ENCODE measurements at regions of chr11 and their contacts with region 1.

Region 1: DNA sequence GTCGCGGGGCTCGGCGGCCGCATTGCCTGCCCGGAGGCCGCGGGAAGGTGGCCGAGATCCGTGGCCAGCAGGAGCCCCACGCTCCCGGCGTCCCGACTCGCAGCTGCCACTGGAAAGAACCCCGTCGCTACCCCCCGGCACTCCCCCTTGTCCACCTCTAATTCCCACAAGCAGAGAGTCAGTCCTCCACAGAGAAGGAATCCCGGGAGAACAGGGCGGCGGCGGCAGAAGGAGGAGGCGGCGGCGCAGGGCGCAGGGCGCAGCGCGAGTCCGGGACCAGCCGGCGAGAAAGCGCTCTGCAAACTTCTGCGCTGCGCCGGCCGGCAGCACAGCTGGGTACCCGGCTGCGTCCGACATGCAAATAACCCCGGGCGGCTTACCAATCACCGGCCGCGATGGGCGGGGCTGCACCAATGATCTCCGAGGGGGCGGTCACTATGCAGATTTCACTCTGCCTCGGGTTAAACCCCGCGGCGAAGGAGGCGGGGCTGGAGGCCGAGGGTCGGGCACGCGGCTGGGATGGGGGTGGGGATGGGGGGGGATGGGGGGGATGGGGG is at the start of gene ABTB2:
- DNase-seq: peak; percentile 96
- ATAC-seq: peak; percentile 89
- H3K4me3 ChIP-seq: peak within 1 kb of the TSS; percentile 56 to 70 (median 66)
- H3K4me3 Mint-ChIP-seq: peak within 1 kb of the TSS; percentile 90
- H3K27ac ChIP-seq: peak within 1 kb of the TSS in 1 of 2 donors; percentile 43
- H3K27ac Mint-ChIP-seq: peak within 1 kb of the TSS; percentile 88
- H3K4me1 ChIP-seq: peaks cover 18 to 33% of the 10 kb centered on the region in 2 donors
- H3K4me1 Mint-ChIP-seq: peaks cover 28% of the 10 kb centered on the region
- H3K27me3 ChIP-seq: peaks cover 0 to 49% (median 41%) of the 10 kb centered on the region in 4 experiments
- H3K27me3 Mint-ChIP-seq: peaks cover 54% of the 10 kb centered on the region
- CTCF ChIP-seq: no peak
- total RNA-seq, gene ABTB2: 4.5 and 5.9 TPM in 2 replicates

Region 2: GRCh38 chr11:33389635-33390034 is 968.1 kb before region 1 on chr11:
- CTCF ChIA-PET with region 1: no interaction called
- POLR2A ChIA-PET with region 1: no interaction called
- intact Hi-C with region 1: loop called (anchors 10 kb)
- DNase-seq: no peak
- ATAC-seq: peak; percentile 45
- H3K4me3 ChIP-seq: peak overlapping the region in 1 of 5 experiments; percentile 44
- H3K4me3 Mint-ChIP-seq: peak overlapping the region; percentile 57
- H3K27ac ChIP-seq: no peak overlapping the region
- H3K27ac Mint-ChIP-seq: peak overlapping the region; percentile 2
- H3K4me1 ChIP-seq: peaks cover 24 to 32% of the 10 kb centered on the region in 2 donors
- H3K4me1 Mint-ChIP-seq: peaks cover 33% of the 10 kb centered on the region
- H3K27me3 ChIP-seq: no peaks in the 10 kb centered on the region
- H3K27me3 Mint-ChIP-seq: no peaks in the 10 kb centered on the region
- CTCF ChIP-seq: no peak

Region 3: DNA sequence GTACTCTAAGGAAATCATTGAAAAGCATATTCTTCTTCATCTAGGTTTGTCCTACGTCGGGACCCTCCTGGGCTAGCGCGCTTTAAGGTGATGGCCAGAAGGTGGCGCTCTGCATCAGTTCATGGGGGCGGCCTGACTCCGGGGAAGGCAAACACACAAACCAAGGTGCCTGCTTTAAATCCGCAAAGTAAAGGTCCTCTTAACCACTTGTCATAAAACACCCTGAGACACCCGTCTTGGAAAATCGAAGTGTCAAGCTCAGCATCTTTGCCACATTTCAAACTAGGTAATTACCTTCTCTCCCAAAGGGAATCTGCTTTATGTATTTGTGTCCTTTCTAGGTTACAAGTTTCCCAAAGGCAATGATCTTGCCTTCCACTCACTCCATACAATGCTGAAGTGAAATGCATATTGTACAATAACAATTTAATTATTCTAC is 499.8 kb before region 1 on chr11:
- CTCF ChIA-PET with region 1: interaction called, 7 read pairs
- POLR2A ChIA-PET with region 1: no interaction called
- intact Hi-C with region 1: loop called (anchors 1 kb)
- DNase-seq: peak; percentile 86
- ATAC-seq: peak; percentile 96
- H3K4me3 ChIP-seq: no peak overlapping the region
- H3K4me3 Mint-ChIP-seq: no peak overlapping the region
- H3K27ac ChIP-seq: no peak overlapping the region
- H3K27ac Mint-ChIP-seq: no peak overlapping the region
- H3K4me1 ChIP-seq: no peaks in the 10 kb centered on the region
- H3K4me1 Mint-ChIP-seq: peaks cover 6% of the 10 kb centered on the region
- H3K27me3 ChIP-seq: no peaks in the 10 kb centered on the region
- H3K27me3 Mint-ChIP-seq: no peaks in the 10 kb centered on the region
- CTCF ChIP-seq: peak; percentile 93

Region 4: DNA sequence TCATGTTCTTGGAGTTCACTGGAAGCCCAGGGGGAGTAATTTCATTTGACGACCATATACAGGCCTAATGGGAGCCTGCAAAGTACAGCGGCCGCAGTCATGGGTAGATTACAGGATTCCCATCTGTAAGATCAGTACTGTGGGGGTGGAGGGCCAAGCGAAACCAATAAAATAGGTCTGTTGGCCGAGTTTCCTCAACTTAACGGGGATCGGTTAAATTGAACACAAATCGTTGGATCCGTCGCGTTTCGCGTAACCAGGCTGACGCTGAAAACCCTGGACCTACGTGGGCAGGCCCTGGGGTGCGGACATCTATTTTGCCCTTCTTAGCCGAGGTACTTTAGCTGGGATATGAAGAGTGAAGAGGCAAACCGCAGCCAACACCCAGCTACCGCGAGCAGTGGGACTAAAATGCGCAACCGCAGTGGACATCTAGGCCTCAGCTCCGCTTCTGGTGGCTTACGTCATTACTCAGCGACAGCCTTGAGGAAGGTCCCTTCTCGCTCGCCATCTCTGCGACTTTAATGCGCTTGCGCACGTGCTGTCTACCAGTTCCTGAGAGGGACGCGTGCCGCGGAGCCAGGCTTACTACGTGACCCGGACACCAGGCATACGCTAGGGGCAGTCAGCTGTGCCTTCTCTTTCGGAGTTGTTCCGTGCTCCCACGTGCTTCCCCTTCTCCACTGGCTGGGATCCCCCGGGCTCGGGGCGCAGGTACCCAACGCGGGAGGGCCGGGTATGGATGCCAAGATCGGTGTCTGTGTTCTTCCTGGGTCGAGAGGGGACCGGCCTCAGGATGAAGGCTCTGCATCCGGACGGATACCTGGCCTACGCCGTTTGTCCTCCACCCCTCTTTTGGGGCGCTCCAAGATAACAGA is 252.5 kb before region 1 on chr11 and contains the start of gene NAT10:
- CTCF ChIA-PET with region 1: interaction called, 3 read pairs
- POLR2A ChIA-PET with region 1: interaction called, 5 read pairs
- intact Hi-C with region 1: loop called (anchors 1 kb)
- DNase-seq: peak; percentile 99
- ATAC-seq: peak; percentile 91
- H3K4me3 ChIP-seq: peak within 1 kb of the TSS; percentile 70 to 99 (median 93)
- H3K4me3 Mint-ChIP-seq: peak within 1 kb of the TSS; percentile 97
- H3K27ac ChIP-seq: peak within 1 kb of the TSS; percentile 95 to 96
- H3K27ac Mint-ChIP-seq: peak within 1 kb of the TSS; percentile 100
- H3K4me1 ChIP-seq: peaks cover 24 to 28% of the 10 kb centered on the region in 2 donors
- H3K4me1 Mint-ChIP-seq: peaks cover 47% of the 10 kb centered on the region
- H3K27me3 ChIP-seq: no peaks in the 10 kb centered on the region
- H3K27me3 Mint-ChIP-seq: no peaks in the 10 kb centered on the region
- CTCF ChIP-seq: no peak
- total RNA-seq, gene NAT10: 73.5 and 74.5 TPM in 2 replicates

Region 5: DNA sequence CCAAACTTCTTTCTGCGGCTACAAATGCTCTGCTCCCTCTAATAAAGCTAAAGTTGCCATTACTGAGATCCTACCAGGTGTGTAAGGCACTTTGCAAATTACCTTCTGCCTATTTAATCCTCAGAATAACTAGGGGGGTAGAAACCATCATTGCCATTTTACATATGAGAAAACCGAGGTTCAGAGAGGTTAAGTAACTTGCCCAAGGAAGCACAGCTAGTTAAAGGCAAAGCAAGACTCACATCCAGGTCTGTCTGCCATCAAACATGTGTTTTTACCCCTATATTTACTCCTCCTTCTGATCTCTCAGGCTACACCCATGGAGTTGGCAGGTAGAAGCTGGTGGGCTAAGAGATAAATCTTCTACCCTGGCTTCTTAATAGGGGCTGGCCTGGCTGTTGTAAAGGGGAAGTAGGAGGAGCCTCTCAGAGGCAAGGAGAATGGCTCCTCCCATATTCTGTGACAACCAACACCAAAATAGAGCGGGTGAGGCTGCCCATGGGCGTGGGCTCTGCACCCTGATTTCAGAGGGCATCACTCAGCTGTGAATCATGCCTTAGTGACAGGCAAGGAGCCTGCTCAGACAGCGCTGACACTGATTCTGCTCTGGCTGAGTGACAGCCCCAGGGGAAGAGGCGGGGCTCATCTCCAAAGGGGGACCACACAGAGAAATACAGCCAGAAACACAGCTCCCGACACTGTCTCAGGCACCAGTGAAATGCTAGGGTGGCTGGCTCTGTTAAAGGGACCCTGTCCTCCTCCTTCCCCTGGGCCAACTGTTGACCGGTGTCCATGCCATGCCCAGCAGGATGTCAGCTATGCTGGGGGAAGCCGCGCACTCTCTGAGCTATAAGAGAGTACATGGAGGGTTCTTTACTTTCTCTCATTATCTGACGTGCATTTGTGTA is 106.8 kb before region 1 on chr11:
- CTCF ChIA-PET with region 1: interaction called, 9 read pairs
- POLR2A ChIA-PET with region 1: interaction called, 4 read pairs
- intact Hi-C with region 1: loop called (anchors 1 kb)
- DNase-seq: peak; percentile 93
- ATAC-seq: peak; percentile 99
- H3K4me3 ChIP-seq: peak overlapping the region in 4 of 5 experiments; percentile 13 to 59 (median 46)
- H3K4me3 Mint-ChIP-seq: peak overlapping the region; percentile 47
- H3K27ac ChIP-seq: peak overlapping the region; percentile 67 to 76
- H3K27ac Mint-ChIP-seq: peak overlapping the region; percentile 72
- H3K4me1 ChIP-seq: peaks cover 19 to 26% of the 10 kb centered on the region in 2 donors
- H3K4me1 Mint-ChIP-seq: peaks cover 36% of the 10 kb centered on the region
- H3K27me3 ChIP-seq: no peaks in the 10 kb centered on the region
- H3K27me3 Mint-ChIP-seq: no peaks in the 10 kb centered on the region
- CTCF ChIP-seq: no peak

Region 6: DNA sequence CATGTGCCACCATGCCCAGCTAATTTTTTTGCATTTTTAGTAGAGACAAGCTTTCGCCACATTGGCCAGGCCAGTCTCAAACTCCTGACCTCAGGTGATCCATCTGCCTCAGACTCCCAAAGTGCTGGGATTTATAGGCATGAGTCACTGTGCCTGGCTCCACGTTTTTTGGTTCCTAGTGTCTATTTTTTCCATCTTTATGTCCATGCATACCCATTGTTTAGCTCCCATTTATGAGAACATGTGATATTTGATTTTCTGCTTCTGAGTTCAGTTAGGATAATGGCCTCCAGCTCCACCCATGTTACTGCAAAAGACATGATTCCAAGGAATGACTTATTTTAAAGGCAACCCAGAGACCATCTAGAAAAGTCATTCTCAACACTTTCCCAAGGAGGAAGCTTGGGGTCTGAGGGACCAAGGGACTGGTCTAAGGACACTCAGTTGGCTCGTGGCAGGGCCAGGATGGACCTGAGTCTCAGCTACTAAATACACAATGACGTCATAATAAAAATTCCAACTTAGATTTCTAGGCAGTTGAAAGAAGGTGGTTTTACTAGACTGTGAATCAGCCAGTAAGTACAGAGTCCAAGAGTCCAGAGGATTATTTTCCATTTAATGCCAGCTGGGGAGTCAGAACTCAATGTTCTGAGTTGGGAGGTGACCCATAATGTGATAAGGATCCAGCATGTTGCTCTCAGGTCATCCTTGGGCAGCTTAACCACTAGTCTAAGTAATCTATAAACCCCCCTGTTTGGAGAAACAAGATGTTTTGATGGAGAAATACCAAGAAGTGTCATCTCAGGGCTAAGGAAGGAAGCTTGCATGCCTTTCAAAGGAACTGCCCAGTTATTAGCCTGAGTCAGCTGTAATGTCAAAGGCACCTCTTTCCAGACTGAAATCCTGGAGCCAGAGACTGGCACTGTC is 39.4 kb before region 1 on chr11:
- CTCF ChIA-PET with region 1: no interaction called
- POLR2A ChIA-PET with region 1: no interaction called
- intact Hi-C with region 1: no loop called
- DNase-seq: no peak
- ATAC-seq: no peak
- H3K4me3 ChIP-seq: no peak overlapping the region
- H3K4me3 Mint-ChIP-seq: no peak overlapping the region
- H3K27ac ChIP-seq: no peak overlapping the region
- H3K27ac Mint-ChIP-seq: no peak overlapping the region
- H3K4me1 ChIP-seq: no peaks in the 10 kb centered on the region
- H3K4me1 Mint-ChIP-seq: peaks cover under 1% of the 10 kb centered on the region
- H3K27me3 ChIP-seq: no peaks in the 10 kb centered on the region
- H3K27me3 Mint-ChIP-seq: no peaks in the 10 kb centered on the region
- CTCF ChIP-seq: no peak

Region 7: DNA sequence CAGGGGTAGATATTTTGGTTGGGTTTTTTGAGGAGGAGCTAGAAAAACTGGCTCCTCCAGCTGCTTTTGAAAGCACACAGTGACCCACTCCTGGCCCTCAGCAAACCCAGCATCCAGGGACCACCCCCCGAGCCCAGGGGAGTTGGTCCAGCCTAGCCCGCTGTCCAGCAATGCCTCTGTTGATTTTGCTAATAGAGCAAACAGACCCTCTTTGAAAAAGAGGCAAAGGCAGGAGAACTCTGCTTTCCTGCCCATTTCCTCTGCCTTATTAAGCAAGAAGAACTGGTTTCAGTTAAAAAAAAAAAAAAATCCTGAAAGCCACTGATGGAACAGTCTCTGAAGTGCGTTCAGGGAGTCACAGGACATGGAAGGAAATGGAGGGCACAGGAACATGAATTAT is 25.3 kb before region 1 on chr11:
- CTCF ChIA-PET with region 1: no interaction called
- POLR2A ChIA-PET with region 1: no interaction called
- intact Hi-C with region 1: no loop called
- DNase-seq: no peak
- ATAC-seq: no peak
- H3K4me3 ChIP-seq: no peak overlapping the region
- H3K4me3 Mint-ChIP-seq: no peak overlapping the region
- H3K27ac ChIP-seq: no peak overlapping the region
- H3K27ac Mint-ChIP-seq: no peak overlapping the region
- H3K4me1 ChIP-seq: no peaks in the 10 kb centered on the region
- H3K4me1 Mint-ChIP-seq: peaks cover 4% of the 10 kb centered on the region
- H3K27me3 ChIP-seq: peaks cover 0 to 3% (median 1%) of the 10 kb centered on the region in 4 experiments
- H3K27me3 Mint-ChIP-seq: peaks cover 3% of the 10 kb centered on the region
- CTCF ChIP-seq: no peak

Region 8: DNA sequence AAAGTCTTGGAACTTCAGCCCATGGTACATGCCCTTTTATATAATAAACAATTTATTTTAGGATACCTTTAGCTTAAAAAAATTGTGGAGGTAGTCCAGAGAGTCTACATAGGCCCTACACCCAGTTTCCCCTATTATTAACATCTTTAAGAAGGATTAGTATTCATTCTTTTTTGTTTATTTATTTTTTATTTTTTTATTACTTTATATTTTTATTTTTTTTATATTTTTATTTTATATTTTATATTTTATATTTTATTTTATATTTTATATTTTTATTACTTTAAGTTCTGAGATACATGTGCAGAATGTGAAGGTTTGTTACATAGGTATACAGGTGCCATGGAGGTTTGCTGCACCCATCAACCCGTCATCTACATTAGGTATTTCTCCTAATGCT is 15.9 kb after region 1 on chr11:
- CTCF ChIA-PET with region 1: no interaction called
- POLR2A ChIA-PET with region 1: no interaction called
- intact Hi-C with region 1: no loop called
- DNase-seq: no peak
- ATAC-seq: no peak
- H3K4me3 ChIP-seq: no peak overlapping the region
- H3K4me3 Mint-ChIP-seq: no peak overlapping the region
- H3K27ac ChIP-seq: no peak overlapping the region
- H3K27ac Mint-ChIP-seq: no peak overlapping the region
- H3K4me1 ChIP-seq: no peaks in the 10 kb centered on the region
- H3K4me1 Mint-ChIP-seq: no peaks in the 10 kb centered on the region
- H3K27me3 ChIP-seq: no peaks in the 10 kb centered on the region
- H3K27me3 Mint-ChIP-seq: peaks cover 11% of the 10 kb centered on the region
- CTCF ChIP-seq: no peak

Region 9: GRCh38 chr11:34492806-34493414 is 135.1 kb after region 1 on chr11:
- CTCF ChIA-PET with region 1: interaction called, 5 read pairs
- POLR2A ChIA-PET with region 1: no interaction called
- intact Hi-C with region 1: loop called (anchors 5 kb)
- DNase-seq: peak; percentile 64
- ATAC-seq: no peak
- H3K4me3 ChIP-seq: no peak overlapping the region
- H3K4me3 Mint-ChIP-seq: no peak overlapping the region
- H3K27ac ChIP-seq: no peak overlapping the region
- H3K27ac Mint-ChIP-seq: no peak overlapping the region
- H3K4me1 ChIP-seq: no peaks in the 10 kb centered on the region
- H3K4me1 Mint-ChIP-seq: no peaks in the 10 kb centered on the region
- H3K27me3 ChIP-seq: no peaks in the 10 kb centered on the region
- H3K27me3 Mint-ChIP-seq: peaks cover 2% of the 10 kb centered on the region
- CTCF ChIP-seq: peak; percentile 76

Measured in B cell (primary cell).